ENCODE measurements at regions of chr7 and their contacts with region 1.

Region 1: DNA sequence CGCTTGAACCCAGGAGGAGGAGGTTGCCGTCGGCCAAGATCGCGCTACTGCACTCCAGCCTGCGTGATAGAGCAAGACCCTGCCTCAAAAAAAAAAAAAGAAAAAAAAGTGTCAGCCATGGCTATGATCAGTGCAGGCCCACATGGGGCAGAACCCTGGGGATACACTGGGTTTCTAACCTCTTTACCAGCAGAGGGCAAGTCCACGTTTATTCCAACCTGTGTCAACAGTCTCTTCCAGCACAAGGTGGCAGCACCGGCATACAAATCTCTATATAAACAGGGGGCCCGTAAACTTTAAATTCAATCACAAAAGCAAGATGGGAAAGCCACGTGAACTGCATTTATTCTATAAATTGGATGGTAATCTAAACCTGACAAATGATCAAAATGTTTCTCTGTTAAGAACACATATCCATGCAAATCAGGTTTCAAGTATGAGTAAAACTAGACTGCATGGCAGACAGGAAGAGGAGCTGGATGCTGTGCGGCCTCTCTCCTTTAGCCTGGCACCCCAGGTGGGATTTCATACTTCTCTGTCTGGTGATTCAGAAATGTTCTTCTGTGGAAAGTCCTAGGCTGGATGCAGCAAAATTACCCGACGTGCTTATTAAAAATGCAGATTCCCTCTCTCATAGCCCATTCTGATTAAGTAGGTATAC is 60.0 kb upstream of the STEAP1B start:
- DNase-seq: peak; percentile 84 to 92 (median 89)
- H3K4me3 ChIP-seq: no peak overlapping the region
- H3K27ac ChIP-seq: no peak overlapping the region
- H3K4me1 ChIP-seq: peaks cover 7 to 26% (median 23%) of the 10 kb centered on the region in 4 experiments
- H3K27me3 ChIP-seq: peaks cover 0 to 40% (median 22%) of the 10 kb centered on the region in 5 experiments

Region 2: DNA sequence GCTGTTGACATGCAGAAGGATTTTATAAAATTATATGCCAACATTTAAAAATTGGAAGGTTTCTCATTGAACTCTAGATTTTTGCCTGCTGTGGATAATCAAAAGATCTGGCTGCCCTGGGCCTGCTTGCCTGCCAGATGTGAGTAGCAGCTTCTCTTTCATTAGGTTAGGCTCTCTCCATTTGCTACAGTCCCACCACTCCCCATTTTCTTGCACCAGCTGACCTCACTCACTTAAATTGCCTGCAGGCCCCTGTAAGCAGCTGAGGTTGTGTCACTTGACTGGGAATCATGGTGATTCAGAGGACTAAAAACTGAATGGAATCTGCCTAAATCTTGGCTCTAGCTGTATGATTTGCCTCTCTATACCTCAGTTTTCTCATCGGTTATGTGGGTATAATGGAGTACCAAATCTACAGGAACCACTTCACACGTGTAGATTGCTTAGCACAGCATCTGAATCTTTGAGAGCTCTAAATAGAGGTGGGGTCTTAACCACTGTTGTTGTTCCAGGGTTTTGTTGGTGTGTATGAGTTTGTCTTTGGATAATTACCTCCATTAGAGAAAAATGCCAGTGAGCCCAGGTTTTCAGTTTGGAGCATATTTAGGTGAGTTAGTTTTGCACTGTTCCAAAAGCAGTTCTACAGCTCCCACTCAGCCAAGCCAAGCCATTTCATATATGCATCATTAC is 184.5 kb before region 1 on chr7:
- CTCF ChIA-PET with region 1: no interaction called
- POLR2A ChIA-PET with region 1: no interaction called
- DNase-seq: no peak
- H3K4me3 ChIP-seq: no peak overlapping the region
- H3K27ac ChIP-seq: no peak overlapping the region
- H3K4me1 ChIP-seq: no peaks in the 10 kb centered on the region
- H3K27me3 ChIP-seq: no peaks in the 10 kb centered on the region

Region 3: DNA sequence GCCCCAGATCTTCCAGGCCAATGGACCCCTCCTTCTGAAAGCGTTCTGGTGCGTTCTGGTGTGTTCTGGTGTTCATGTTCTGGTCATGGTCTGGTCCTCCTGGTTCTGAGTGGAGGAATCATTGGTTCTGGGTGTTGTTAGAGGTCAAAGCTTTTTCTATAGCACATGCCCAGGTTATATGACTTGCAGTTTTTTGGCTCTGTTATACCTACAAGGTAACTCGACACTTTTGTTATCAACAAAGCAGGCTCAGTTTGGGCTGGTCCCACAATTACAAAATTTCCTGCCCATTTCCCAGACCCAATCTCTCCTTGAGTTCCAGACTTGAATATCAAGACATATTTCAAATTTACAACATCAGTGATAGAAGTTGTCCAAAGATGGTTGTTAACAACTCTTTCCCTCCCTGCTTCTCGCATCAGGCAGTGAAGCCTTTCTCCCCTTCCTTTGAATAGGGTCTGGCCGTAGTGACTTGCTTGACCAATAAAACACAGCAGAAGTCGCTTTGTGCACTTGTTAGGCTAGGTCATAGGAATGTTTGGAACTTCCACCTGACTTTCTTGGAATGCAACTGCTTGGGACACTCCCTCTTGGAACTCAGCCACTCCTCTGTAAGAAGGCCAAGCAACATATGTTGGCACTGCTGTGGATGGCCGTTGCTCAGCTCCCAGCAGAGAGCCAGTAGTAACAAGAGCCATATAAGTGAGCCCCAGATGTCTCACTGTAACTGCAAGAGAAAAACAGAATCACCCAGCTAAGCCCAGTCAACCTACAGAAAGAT is 23.1 kb after region 1 on chr7:
- CTCF ChIA-PET with region 1: interaction called, 11 read pairs
- POLR2A ChIA-PET with region 1: no interaction called
- DNase-seq: no peak
- H3K4me3 ChIP-seq: no peak overlapping the region
- H3K27ac ChIP-seq: no peak overlapping the region
- H3K4me1 ChIP-seq: peaks cover 15 to 56% (median 25%) of the 10 kb centered on the region in 4 experiments
- H3K27me3 ChIP-seq: peaks cover 0 to 15% (median 5%) of the 10 kb centered on the region in 5 experiments

Region 4: GRCh38 chr7:22726345-22727185 is 166.6 kb after region 1 on chr7:
- CTCF ChIA-PET with region 1: interaction called, 199 read pairs
- POLR2A ChIA-PET with region 1: no interaction called
- DNase-seq: peak; percentile 65 to 86 (median 86)
- H3K4me3 ChIP-seq: peak overlapping the region in 6 of 7 experiments; percentile 35 to 66 (median 48)
- H3K27ac ChIP-seq: peak overlapping the region in 1 of 2 experiments; percentile 56
- H3K4me1 ChIP-seq: peaks cover 6 to 37% (median 30%) of the 10 kb centered on the region in 4 experiments
- H3K27me3 ChIP-seq: peaks cover 2 to 33% (median 9%) of the 10 kb centered on the region in 5 experiments

Region 5: GRCh38 chr7:22732556-22733126 is 172.7 kb after region 1 on chr7:
- CTCF ChIA-PET with region 1: interaction called, 199 read pairs
- POLR2A ChIA-PET with region 1: no interaction called
- DNase-seq: no peak
- H3K4me3 ChIP-seq: no peak overlapping the region
- H3K27ac ChIP-seq: no peak overlapping the region
- H3K4me1 ChIP-seq: peaks cover 0 to 6% (median 1%) of the 10 kb centered on the region in 4 experiments
- H3K27me3 ChIP-seq: peaks cover 2 to 12% (median 5%) of the 10 kb centered on the region in 5 experiments

Region 6: GRCh38 chr7:22782616-22783232 is 222.8 kb after region 1 on chr7:
- CTCF ChIA-PET with region 1: interaction called, 47 read pairs
- POLR2A ChIA-PET with region 1: no interaction called
- DNase-seq: peak; percentile 59 to 83 (median 74)
- H3K4me3 ChIP-seq: no peak overlapping the region
- H3K27ac ChIP-seq: no peak overlapping the region
- H3K4me1 ChIP-seq: no peaks in the 10 kb centered on the region
- H3K27me3 ChIP-seq: peaks cover 0 to 2% (median 0%) of the 10 kb centered on the region in 5 experiments

Region 7: GRCh38 chr7:23055582-23056178 is 495.7 kb after region 1 on chr7:
- CTCF ChIA-PET with region 1: interaction called, 24 read pairs
- POLR2A ChIA-PET with region 1: no interaction called
- DNase-seq: peak; percentile 73 to 84 (median 81)
- H3K4me3 ChIP-seq: no peak overlapping the region
- H3K27ac ChIP-seq: no peak overlapping the region
- H3K4me1 ChIP-seq: no peaks in the 10 kb centered on the region
- H3K27me3 ChIP-seq: no peaks in the 10 kb centered on the region

Measured in common myeloid progenitor, CD34-positive (primary cell).